PC-3 (cell line): ENCODE measurements at regions of chr1 and their contacts with region 1.

Region 1: GRCh38 chr1:215273838-215274516 is 191.4 kb downstream of the KCNK2 start:
- DNase-seq: peak; percentile 94
- ATAC-seq: peak; percentile 98
- H3K4me3 ChIP-seq: no peak overlapping the region
- H3K27ac ChIP-seq: peak overlapping the region; percentile 10
- H3K4me1 ChIP-seq: peaks cover 18% of the 10 kb centered on the region
- H3K27me3 ChIP-seq: no peaks in the 10 kb centered on the region
- CTCF ChIP-seq: no peak

Region 2: DNA sequence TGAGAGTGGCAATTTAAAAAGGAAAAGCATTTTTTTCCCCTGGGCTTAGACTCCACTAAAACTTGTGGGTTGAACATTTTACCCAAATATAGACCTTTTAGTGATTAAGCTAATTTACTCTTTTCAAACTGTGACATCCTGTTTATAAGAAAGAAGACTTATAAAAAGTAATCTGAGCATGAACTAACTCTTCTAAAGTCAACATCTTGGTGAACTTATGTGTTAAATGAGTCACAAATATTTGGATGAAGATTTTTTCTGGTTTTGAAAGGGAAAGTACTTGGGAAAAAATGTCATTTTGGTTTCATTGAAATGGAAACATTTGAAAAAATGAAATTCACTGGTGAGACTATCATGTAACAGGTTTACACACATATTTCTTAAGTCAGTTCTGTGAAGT is 81.7 kb before region 1 on chr1:
- CTCF ChIA-PET with region 1: no interaction called
- POLR2A ChIA-PET with region 1: no interaction called
- intact Hi-C with region 1: loop called (anchors 1 kb)
- DNase-seq: peak; percentile 85
- ATAC-seq: peak; percentile 60
- H3K4me3 ChIP-seq: no peak overlapping the region
- H3K27ac ChIP-seq: peak overlapping the region; percentile 16
- H3K4me1 ChIP-seq: peaks cover 38% of the 10 kb centered on the region
- H3K27me3 ChIP-seq: no peaks in the 10 kb centered on the region
- CTCF ChIP-seq: no peak

Region 3: GRCh38 chr1:215599418-215600074 is 325.6 kb after region 1 on chr1:
- CTCF ChIA-PET with region 1: no interaction called
- POLR2A ChIA-PET with region 1: no interaction called
- intact Hi-C with region 1: loop called (anchors 10 kb)
- DNase-seq: no peak
- ATAC-seq: no peak
- H3K4me3 ChIP-seq: no peak overlapping the region
- H3K27ac ChIP-seq: no peak overlapping the region
- H3K4me1 ChIP-seq: peaks cover 13% of the 10 kb centered on the region
- H3K27me3 ChIP-seq: no peaks in the 10 kb centered on the region
- CTCF ChIP-seq: no peak